ENCODE measurements at regions of chr3 and their contacts with region 1.

Region 1: DNA sequence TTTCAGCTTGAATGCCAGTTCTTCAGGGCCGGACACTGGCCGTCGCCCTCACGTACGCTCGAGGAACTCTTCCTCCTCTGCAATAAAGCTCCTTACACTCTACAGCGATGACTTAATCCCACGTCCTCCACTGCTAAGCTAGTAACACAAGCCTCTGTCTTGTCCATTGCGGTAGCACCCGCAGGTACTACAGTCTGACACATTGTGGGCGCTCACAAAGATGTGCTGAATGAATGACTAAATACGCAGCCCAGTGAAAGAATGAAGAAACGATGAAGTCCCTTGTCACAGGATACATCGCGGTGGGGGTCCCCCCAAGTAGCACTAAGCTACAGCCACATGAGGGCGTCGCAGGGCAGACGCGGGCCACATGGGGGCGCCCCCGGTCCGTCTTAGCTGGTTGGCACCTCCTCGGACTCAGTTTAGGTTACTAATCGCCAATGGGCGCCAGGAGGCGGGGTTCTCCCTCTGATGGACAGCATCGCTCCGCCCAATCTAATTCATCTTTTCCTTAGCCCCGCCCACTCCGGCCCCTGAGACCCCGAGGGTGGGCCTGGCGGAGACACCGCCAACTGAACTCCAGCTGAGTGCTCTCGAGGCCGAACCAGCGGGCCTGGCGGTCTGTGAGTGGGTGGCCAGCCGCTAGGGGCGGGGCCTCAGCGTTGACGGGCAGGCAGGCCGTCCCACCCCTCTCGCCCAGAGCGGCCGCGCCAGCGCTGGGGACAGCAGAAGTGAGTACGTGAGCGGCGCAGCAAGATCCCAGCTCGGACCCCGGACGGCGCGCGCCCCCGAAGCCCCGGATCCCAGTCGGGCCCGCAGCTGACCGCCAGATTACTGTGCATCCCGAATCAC is at the start of gene EPHB3:
- DNase-seq: peak; percentile 96
- ATAC-seq: peak; percentile 91 to 98
- H3K4me3 ChIP-seq: peak within 1 kb of the TSS; percentile 59
- H3K27ac ChIP-seq: peak within 1 kb of the TSS; percentile 43 to 79; a peak in 4 of 6 replicates
- H3K4me1 ChIP-seq: peaks cover 28% of the 10 kb centered on the region
- CTCF ChIP-seq: peak; percentile 98
- EP300 ChIP-seq: no peak
- POLR2A ChIP-seq: peak; percentile 69
- RAD21 ChIP-seq: peak; percentile 94 to 97
- polyA plus RNA-seq, gene EPHB3: 0.36 and 0.52 TPM in 2 replicates

Region 2: GRCh38 chr3:184592371-184593219 is 31.3 kb after region 1 on chr3:
- CTCF ChIA-PET with region 1: interaction called, 10 read pairs
- POLR2A ChIA-PET with region 1: no interaction called
- DNase-seq: no peak
- ATAC-seq: peak in 1 of 2 experiments; percentile 29; a peak in 2 of 6 replicates
- H3K4me3 ChIP-seq: no peak overlapping the region
- H3K27ac ChIP-seq: no peak overlapping the region
- H3K4me1 ChIP-seq: no peaks in the 10 kb centered on the region
- CTCF ChIP-seq: no peak
- EP300 ChIP-seq: no peak
- POLR2A ChIP-seq: no peak
- RAD21 ChIP-seq: no peak

Region 3: GRCh38 chr3:184727357-184728009 is 166.2 kb after region 1 on chr3:
- CTCF ChIA-PET with region 1: interaction called, 29 read pairs
- POLR2A ChIA-PET with region 1: no interaction called
- DNase-seq: peak; percentile 40 to 68
- ATAC-seq: peak; percentile 84 to 96
- H3K4me3 ChIP-seq: no peak overlapping the region
- H3K27ac ChIP-seq: no peak overlapping the region
- H3K4me1 ChIP-seq: no peaks in the 10 kb centered on the region
- CTCF ChIP-seq: peak; percentile 55; the same call in 2 of the 3 replicates
- EP300 ChIP-seq: no peak
- POLR2A ChIP-seq: no peak
- RAD21 ChIP-seq: peak; percentile 34 to 49; a peak in 3 of 5 replicates

Region 4: GRCh38 chr3:184765730-184766074 is 204.4 kb after region 1 on chr3:
- CTCF ChIA-PET with region 1: interaction called, 10 read pairs
- POLR2A ChIA-PET with region 1: no interaction called
- DNase-seq: no peak
- ATAC-seq: no peak
- H3K4me3 ChIP-seq: no peak overlapping the region
- H3K27ac ChIP-seq: no peak overlapping the region
- H3K4me1 ChIP-seq: no peaks in the 10 kb centered on the region
- CTCF ChIP-seq: no peak
- EP300 ChIP-seq: no peak
- POLR2A ChIP-seq: no peak
- RAD21 ChIP-seq: no peak

Region 5: GRCh38 chr3:184786280-184786941 is 225.1 kb after region 1 on chr3:
- CTCF ChIA-PET with region 1: interaction called, 34 read pairs
- POLR2A ChIA-PET with region 1: interaction called, 4 read pairs
- DNase-seq: no peak
- ATAC-seq: 0 out of 6 replicates have a peak, but pooled peaks of 1 of the 2 experiments have one; percentile 24
- H3K4me3 ChIP-seq: no peak overlapping the region
- H3K27ac ChIP-seq: no peak overlapping the region
- H3K4me1 ChIP-seq: no peaks in the 10 kb centered on the region
- CTCF ChIP-seq: no peak
- EP300 ChIP-seq: no peak
- POLR2A ChIP-seq: no peak
- RAD21 ChIP-seq: no peak

Region 6: GRCh38 chr3:184811999-184812661 is 250.8 kb after region 1 on chr3 and contains the start of gene VPS8:
- CTCF ChIA-PET with region 1: interaction called, 15 read pairs
- POLR2A ChIA-PET with region 1: no interaction called
- DNase-seq: peak; percentile 75 to 91
- ATAC-seq: peak; percentile 97
- H3K4me3 ChIP-seq: peak within 1 kb of the TSS; percentile 66
- H3K27ac ChIP-seq: peak within 1 kb of the TSS; percentile 78 to 95
- H3K4me1 ChIP-seq: peaks cover 13% of the 10 kb centered on the region; the same call in 2 of the 3 replicates
- CTCF ChIP-seq: no peak
- EP300 ChIP-seq: no peak
- POLR2A ChIP-seq: peak; percentile 90
- RAD21 ChIP-seq: no peak
- polyA plus RNA-seq, gene VPS8: 27.0 and 30.1 TPM in 2 replicates

Measured in A549 (cell line).